Endothelial cell of umbilical vein (primary cell): ENCODE measurements at regions of chr14 and their contacts with region 1.

Region 1: DNA sequence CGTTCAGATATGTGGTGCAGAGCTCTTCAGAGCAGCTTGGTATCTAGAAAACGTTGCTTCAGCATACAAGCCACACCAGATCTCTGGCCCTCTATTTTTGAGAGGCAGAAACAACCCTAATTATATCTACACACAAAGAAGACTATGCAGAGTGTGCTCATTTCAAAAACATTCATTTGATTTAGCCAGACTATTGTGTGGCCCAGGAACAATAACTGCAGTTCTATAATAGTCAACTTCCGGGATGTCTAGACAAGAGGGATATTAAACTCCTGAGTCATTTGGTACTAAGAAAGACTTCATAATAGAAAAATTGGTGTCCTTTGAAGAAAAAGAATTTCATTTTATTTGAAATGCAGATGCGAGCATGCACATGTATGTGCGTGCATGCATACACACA is 153.8 kb downstream of the PELI2 start:
- DNase-seq: peak; percentile 94
- H3K4me3 ChIP-seq: no peak overlapping the region
- H3K27ac ChIP-seq: peak overlapping the region; percentile 100
- H3K4me1 ChIP-seq: peaks cover 34% of the 10 kb centered on the region
- H3K27me3 ChIP-seq: no peaks in the 10 kb centered on the region
- CTCF ChIP-seq: no peak
- POLR2A ChIP-seq: no peak

Region 2: DNA sequence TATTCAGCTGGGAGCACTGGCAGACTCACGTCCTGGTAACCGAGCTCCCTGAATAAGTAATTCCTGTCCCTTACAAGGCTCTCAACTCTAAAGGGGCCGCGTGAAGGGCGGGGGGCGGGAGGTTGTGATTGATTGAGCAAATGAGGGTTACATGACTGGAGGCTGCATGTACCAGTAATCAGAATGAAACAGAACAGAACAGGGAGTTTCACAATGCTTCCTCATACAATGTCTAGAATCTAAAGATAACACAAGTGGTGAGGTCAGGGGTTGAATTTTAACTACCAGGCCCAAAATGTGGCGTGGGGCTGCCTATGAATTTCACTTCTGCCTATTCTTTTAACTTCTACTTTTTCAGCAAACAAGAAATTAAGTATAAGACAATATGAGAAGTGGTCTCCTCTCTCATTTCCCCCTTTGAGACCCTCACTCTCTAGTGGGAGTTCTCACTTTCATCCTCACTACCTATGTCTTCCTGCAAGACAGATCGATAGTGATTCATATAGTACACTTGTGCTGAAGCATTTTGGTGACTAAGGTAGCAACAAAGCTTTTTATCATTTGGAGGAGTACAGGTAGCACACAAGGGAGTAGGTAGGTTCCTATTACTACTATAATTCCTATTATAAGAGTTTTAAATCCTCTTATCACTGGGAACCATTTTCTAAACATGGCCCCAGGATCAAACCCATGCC is 452.2 kb before region 1 on chr14:
- CTCF ChIA-PET with region 1: no interaction called
- POLR2A ChIA-PET with region 1: no interaction called
- dilution Hi-C with region 1: no loop called
- intact Hi-C with region 1: no loop called
- DNase-seq: no peak
- H3K4me3 ChIP-seq: no peak overlapping the region
- H3K27ac ChIP-seq: no peak overlapping the region
- H3K4me1 ChIP-seq: peaks cover 1% of the 10 kb centered on the region
- H3K27me3 ChIP-seq: peaks cover 0 to 3% of the 10 kb centered on the region in 2 experiments
- CTCF ChIP-seq: no peak
- POLR2A ChIP-seq: no peak

Region 3: DNA sequence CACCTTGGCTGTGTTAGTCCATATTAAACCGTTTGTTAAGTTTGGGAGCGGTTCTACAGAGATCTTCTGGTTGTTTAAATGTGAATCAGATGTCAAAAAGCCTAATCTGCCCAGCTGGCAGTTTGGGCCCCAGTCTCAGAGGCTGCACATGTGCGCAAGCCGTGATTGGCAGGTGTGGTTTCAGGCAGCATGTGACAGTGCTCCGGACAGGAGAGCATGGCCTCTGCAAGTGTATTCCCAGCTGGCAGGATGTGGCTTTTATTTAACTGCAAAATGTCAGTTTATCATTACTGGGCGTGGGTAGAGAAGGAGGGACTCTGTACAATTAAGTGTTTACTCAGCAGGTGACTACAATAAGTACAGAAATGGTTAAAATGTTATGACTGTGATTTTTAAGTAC is 76.3 kb before region 1 on chr14:
- CTCF ChIA-PET with region 1: no interaction called
- POLR2A ChIA-PET with region 1: no interaction called
- dilution Hi-C with region 1: no loop called
- intact Hi-C with region 1: loop called (anchors 1 kb)
- DNase-seq: peak; percentile 31
- H3K4me3 ChIP-seq: no peak overlapping the region
- H3K27ac ChIP-seq: no peak overlapping the region
- H3K4me1 ChIP-seq: peaks cover 19% of the 10 kb centered on the region
- H3K27me3 ChIP-seq: no peaks in the 10 kb centered on the region
- CTCF ChIP-seq: no peak
- POLR2A ChIP-seq: no peak

Region 4: DNA sequence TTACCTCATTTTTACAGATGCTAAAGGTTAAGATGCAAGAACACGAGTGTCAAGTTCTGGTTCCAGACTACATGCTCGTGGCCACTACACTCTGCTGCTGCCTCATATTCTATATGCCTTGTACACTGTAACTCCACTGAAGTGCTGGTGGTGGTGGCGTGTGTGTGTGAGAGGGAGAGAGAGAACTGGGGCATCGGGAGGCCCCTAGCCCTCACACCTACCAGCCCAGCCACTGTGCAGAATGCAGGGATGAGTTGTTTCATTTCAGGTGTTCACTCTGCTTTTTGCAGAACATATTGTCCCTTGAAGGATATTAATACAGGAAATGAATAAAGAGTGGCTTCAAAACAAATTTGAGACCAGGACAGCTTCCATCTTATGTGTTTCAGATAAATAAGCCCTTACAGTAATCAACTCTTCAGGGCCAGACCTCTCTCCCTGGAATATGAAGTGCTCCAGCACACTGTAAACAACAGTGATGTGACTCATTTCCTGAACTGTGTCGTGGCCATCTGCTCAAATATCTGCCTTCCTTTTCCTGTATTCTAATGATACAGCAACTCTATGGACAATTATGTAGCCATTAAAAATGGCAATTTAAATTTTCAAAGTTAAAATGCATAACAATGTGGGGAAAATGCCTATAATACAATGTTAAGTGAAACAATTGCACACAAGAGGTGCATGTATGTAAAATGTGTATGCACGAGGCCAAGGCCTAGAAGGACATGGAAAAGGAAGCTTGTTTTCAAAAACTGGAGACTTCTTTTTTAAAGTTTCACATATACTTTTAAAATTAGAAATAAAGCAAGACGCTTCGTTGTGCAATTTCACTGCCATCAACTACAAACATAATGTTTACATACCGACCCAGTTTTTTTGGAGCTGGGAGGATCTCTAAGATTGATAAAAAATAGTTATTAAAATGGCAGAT is 61.7 kb after region 1 on chr14:
- CTCF ChIA-PET with region 1: no interaction called
- POLR2A ChIA-PET with region 1: no interaction called
- dilution Hi-C with region 1: no loop called
- intact Hi-C with region 1: loop called (anchors 1 kb)
- DNase-seq: peak; percentile 91
- H3K4me3 ChIP-seq: no peak overlapping the region
- H3K27ac ChIP-seq: peak overlapping the region; percentile 99
- H3K4me1 ChIP-seq: peaks cover 25% of the 10 kb centered on the region
- H3K27me3 ChIP-seq: no peaks in the 10 kb centered on the region
- CTCF ChIP-seq: no peak
- POLR2A ChIP-seq: peak; percentile 36

Region 5: DNA sequence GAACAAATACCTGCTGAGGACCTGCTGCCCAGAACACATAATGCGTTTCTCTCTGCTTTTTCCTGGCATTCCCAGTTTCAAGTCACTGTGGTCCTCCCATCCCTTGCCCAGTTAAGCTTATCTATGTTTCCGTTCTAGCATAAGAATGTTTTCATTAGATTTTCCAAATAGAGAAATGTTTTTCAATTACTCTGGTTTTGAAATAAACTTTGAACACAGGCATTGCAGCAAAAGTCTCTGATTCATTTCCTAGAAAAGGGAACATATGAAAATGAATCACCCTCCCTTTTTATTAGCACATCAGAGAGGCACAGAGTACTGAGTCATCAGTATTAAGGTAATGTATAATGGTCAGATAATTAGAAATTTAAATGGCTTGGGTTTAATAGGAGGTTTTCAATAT is 106.5 kb after region 1 on chr14:
- CTCF ChIA-PET with region 1: no interaction called
- POLR2A ChIA-PET with region 1: no interaction called
- dilution Hi-C with region 1: no loop called
- intact Hi-C with region 1: loop called (anchors 1 kb)
- DNase-seq: peak; percentile 90
- H3K4me3 ChIP-seq: no peak overlapping the region
- H3K27ac ChIP-seq: peak overlapping the region; percentile 54
- H3K4me1 ChIP-seq: peaks cover 24% of the 10 kb centered on the region
- H3K27me3 ChIP-seq: no peaks in the 10 kb centered on the region
- CTCF ChIP-seq: no peak
- POLR2A ChIP-seq: no peak

Region 6: DNA sequence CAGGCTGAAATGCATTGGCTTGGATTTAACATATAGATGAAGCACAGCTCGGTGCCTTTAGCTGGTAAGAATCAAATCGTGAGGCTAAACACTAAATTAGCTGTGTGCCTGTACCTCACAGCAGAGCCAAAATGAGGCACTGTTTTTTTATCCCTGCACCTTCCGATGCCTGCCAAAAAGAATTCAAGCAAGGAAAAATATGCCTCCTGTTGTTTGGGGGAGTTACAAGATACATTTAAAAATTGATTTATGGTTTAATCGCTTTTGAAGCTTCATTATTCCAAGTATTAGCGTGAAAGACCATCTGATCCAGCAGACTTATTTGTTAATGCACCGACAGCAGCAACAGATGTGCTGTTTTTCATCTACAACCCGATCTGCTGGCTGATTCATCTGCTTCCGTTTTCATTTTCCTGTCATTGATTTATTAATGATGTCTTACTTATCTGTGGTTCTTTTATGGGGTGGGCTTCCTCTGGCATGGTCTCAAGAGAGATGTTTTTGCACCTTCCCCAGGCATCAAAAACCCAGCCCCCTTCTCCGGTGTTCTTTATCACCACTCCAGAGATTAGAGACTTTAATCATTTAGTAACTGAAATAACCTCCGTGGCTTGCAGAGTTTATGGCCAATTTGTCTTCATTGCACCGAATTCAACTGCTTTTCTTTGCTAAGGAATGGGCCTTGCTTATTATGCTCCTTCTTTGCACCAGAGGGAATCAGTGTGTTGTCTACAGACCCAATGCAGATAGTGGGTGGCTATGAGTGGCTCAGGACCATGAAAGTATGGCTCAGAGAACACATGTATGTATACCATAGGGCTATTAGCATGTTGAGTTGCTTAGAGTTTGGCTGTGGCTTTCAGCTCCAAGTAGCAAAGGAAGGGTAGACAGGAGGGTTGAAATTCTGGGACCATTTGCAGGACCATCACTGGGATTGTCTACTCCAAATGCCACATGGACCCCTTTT is 140.8 kb after region 1 on chr14:
- CTCF ChIA-PET with region 1: no interaction called
- POLR2A ChIA-PET with region 1: no interaction called
- dilution Hi-C with region 1: no loop called
- intact Hi-C with region 1: loop called (anchors 5 kb)
- DNase-seq: peak; percentile 79
- H3K4me3 ChIP-seq: no peak overlapping the region
- H3K27ac ChIP-seq: no peak overlapping the region
- H3K4me1 ChIP-seq: peaks cover 24% of the 10 kb centered on the region
- H3K27me3 ChIP-seq: no peaks in the 10 kb centered on the region
- CTCF ChIP-seq: no peak
- POLR2A ChIP-seq: peak; percentile 39

Region 7: GRCh38 chr14:57362361-57362760 is 1090.4 kb after region 1 on chr14:
- CTCF ChIA-PET with region 1: no interaction called
- POLR2A ChIA-PET with region 1: no interaction called
- dilution Hi-C with region 1: no loop called
- intact Hi-C with region 1: loop called (anchors 2 kb)
- DNase-seq: peak; percentile 94
- H3K4me3 ChIP-seq: no peak overlapping the region
- H3K27ac ChIP-seq: peak overlapping the region; percentile 89
- H3K4me1 ChIP-seq: peaks cover 28% of the 10 kb centered on the region
- H3K27me3 ChIP-seq: no peaks in the 10 kb centered on the region
- CTCF ChIP-seq: no peak
- POLR2A ChIP-seq: peak; percentile 77